GM12878 (cell line): ENCODE measurements at regions of chr12 and their contacts with region 1.

Region 1: DNA sequence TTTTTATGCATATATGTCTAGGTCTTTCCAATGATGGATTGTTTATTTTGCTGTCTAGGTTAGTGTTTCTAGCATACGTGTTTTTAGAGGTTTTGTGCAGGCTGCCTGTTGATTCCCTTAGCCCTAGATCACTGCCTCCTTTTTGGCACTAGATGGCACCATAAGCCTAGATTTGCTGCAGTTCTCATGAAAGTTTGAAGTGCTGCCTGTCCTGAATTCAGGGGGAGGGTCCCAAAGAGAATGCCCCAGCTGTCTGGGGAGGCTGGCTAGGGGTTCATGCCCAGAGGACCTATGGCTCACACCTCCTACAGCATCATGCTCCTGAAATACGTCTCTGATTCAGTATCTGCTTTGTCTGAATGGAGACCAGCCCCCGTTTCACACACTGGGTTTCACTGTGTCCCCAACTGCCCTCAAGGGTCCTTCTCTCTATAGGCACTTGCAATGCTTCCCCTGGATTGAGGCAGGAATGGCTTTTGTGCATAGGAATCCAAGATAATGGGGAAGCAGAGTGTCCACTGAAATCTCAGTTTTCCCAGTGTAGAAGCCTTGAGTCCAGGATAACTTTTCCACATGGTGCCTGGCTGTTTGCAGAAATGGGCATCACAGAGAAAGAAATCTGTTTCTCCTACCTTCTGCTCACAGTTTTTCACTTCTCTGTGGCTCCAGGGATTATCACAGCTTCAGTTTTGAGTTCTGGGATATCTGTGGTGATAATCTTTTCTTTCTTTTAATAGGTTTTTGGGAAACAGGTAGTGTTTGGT is 14.2 kb upstream of the TXNRD1 start:
- DNase-seq: peak; percentile 35
- ATAC-seq: peak; percentile 90
- H3K4me3 ChIP-seq: no peak overlapping the region
- H3K27ac ChIP-seq: no peak overlapping the region
- H3K4me1 ChIP-seq: no peaks in the 10 kb centered on the region
- H3K27me3 ChIP-seq: no peaks in the 10 kb centered on the region
- CTCF ChIP-seq: peak; percentile 80 to 83 (median 83)
- EP300 ChIP-seq: no peak
- POLR2A ChIP-seq: no peak
- RAD21 ChIP-seq: peak; percentile 95

Region 2: GRCh38 chr12:104166465-104166864 is 35.0 kb before region 1 on chr12:
- CTCF ChIA-PET with region 1: no interaction called
- POLR2A ChIA-PET with region 1: no interaction called
- RAD21 ChIA-PET with region 1: no interaction called
- SMC1A ChIA-PET with region 1: no interaction called
- in situ Hi-C with region 1: no loop called
- intact Hi-C with region 1: no loop called
- DNase-seq: no peak
- ATAC-seq: no peak
- H3K4me3 ChIP-seq: no peak overlapping the region
- H3K27ac ChIP-seq: no peak overlapping the region
- H3K4me1 ChIP-seq: no peaks in the 10 kb centered on the region
- H3K27me3 ChIP-seq: no peaks in the 10 kb centered on the region
- CTCF ChIP-seq: no peak
- EP300 ChIP-seq: no peak
- POLR2A ChIP-seq: no peak
- RAD21 ChIP-seq: no peak

Region 3: DNA sequence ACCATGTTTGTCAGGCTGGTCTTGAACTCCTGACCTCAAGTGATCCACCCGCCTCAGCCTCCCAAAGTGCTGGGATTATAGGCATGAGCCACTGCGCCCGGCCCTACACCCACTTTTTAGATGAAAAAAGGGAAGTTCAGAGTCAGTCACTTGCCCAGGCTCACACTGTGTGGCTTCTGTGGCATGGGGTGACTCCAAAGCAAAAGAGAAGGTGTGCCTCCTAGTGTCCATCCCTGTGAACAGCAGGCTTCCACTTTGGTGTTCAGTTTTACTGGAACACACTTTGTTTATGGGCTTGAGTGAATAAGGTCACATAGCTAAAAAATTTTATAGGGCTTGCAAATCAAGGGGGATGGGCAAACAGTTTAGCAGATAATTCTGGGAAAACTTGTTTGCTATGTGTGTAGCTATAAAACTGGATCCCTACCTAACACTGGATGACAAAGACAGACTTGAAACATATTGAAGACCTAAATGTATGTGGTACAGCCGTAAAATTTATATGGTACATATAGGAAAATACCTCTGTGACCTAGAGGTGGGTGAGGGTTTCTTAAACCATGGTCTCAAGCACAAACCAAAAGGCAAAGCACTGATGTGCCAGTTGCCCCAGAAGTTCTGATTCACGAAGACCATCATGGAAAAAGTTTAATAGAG is 157.1 kb after region 1 on chr12:
- CTCF ChIA-PET with region 1: interaction called, 33 read pairs
- POLR2A ChIA-PET with region 1: no interaction called
- RAD21 ChIA-PET with region 1: interaction called, 3 read pairs
- SMC1A ChIA-PET with region 1: interaction called, 4 read pairs
- in situ Hi-C with region 1: loop called (anchors 5 kb)
- intact Hi-C with region 1: loop called (anchors 1 kb)
- DNase-seq: peak; percentile 44
- ATAC-seq: peak; percentile 96
- H3K4me3 ChIP-seq: no peak overlapping the region
- H3K27ac ChIP-seq: no peak overlapping the region
- H3K4me1 ChIP-seq: no peaks in the 10 kb centered on the region
- H3K27me3 ChIP-seq: no peaks in the 10 kb centered on the region
- CTCF ChIP-seq: peak; percentile 91 to 96 (median 92)
- EP300 ChIP-seq: no peak
- POLR2A ChIP-seq: no peak
- RAD21 ChIP-seq: peak; percentile 90

Region 4: DNA sequence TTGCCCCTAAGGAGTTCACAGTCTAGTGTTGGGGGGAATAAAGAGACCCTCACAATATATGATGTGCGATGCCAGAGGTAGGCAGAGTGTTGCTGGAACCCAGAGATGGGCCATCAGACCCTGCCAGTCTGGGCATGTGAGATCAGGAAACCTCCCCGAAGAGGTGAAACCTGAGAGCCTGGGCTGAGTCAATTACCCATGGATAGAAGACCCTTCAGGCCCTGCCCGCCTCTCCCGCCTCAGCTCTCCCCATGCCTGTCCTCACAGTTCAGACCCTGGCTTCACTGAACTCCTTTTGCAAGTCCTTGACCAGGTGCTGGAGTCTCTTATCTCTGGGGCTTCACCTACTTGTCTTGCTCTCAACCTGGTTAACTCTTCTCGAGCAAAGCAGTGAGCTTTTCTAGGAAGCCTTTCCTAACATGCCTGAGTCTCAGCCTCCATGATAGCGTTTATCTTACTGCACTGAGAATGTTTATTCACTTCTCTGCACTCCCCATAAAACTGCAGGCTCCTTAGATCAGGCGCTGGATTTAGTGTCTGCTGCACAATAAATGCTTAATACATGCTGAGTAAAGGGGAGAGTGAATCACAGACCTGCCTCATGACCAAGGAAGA is 863.3 kb after region 1 on chr12:
- CTCF ChIA-PET with region 1: no interaction called
- POLR2A ChIA-PET with region 1: no interaction called
- RAD21 ChIA-PET with region 1: no interaction called
- SMC1A ChIA-PET with region 1: no interaction called
- in situ Hi-C with region 1: loop called (anchors 5 kb)
- intact Hi-C with region 1: no loop called
- DNase-seq: no peak
- ATAC-seq: no peak
- H3K4me3 ChIP-seq: no peak overlapping the region
- H3K27ac ChIP-seq: no peak overlapping the region
- H3K4me1 ChIP-seq: no peaks in the 10 kb centered on the region
- H3K27me3 ChIP-seq: no peaks in the 10 kb centered on the region; a peak in 1 of 4 replicates
- CTCF ChIP-seq: no peak
- EP300 ChIP-seq: no peak
- POLR2A ChIP-seq: no peak
- RAD21 ChIP-seq: no peak